ENCODE measurements at regions of chr5 and their contacts with region 1.

Region 1: DNA sequence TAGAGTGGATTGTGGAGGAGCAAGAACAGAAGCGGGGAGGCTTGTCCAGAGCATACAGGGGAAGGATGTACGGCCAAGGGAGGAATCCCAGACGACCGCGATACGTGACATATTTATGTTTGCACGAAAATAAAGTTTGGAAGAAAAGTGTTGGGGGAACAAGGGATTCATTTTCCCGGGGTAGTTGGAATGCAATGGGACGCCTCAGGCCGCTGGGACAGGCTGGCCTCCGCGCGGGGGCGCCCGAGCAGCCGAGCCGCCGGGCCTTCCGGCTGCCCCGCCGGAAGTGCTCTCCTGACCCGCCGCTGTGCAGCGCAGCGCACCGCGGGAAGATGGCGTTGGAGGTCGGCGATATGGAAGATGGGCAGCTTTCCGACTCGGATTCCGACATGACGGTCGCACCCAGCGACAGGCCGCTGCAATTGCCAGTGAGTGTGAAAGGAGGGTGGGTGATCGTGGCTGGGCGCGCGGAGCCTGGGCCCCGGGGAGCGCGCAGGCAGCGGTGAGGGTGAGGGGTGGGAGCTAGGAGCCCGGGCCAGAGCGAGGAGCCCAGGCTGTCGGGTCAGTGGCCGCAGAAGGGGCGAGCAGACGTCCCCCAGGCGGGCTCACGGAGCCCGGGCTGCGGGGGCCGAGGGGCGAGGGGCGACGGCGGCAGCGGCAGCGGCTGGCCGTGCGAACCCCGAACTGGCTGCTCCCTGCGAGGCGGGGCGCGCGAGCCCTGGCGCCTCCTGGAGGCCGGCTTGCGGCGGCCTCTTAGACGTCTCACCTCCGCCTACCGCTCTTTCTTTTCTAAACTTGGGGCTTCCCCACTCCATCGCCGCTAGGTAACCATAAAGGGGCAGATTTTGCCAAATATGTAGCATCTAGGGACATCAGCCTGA is at the start of gene PHAX:
- DNase-seq: peak; percentile 21
- H3K4me3 ChIP-seq: peak within 1 kb of the TSS; percentile 87
- H3K27me3 ChIP-seq: no peaks in the 10 kb centered on the region
- CTCF ChIP-seq: peak; percentile 71
- polyA plus RNA-seq, gene PHAX: 40.7 and 41.6 TPM in 2 replicates

Region 2: DNA sequence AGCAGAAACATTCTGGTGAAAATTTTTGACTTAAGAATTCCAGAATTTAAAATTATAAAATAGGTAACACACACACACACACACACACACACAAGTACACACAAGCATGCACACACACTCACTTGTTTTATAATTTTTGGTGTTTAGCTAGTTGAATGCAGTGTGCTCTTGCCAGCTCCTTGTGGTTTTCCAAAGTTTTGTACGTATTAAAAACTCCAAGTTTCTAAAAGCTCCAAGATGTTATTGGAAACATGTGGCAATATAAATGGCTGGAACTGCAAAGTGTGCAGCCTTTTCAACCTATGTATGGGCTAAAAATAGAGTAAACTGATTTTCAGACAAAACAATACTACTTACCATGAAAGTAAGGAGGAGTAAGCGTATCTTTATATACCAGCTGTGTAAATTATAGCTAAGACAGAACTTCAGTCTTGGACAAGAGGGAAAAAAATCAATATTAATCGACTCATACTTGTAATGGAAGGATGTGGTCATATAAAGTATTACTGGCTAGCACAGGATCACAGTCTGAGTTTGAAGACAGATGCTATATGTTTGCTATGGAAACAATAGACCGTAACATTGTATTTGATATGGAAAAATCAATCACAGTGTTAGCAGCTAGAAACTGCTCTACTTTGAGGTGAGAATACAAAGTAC is 904.7 kb before region 1 on chr5:
- CTCF ChIA-PET with region 1: no interaction called
- POLR2A ChIA-PET with region 1: no interaction called
- DNase-seq: no peak
- H3K4me3 ChIP-seq: no peak overlapping the region
- H3K27me3 ChIP-seq: no peaks in the 10 kb centered on the region
- CTCF ChIP-seq: no peak

Region 3: GRCh38 chr5:126354012-126354857 is 246.6 kb before region 1 on chr5:
- CTCF ChIA-PET with region 1: interaction called, 11 read pairs
- POLR2A ChIA-PET with region 1: no interaction called
- DNase-seq: peak; percentile 96
- H3K4me3 ChIP-seq: peak overlapping the region; percentile 17; the same call in 1 of the 2 replicates
- H3K27me3 ChIP-seq: no peaks in the 10 kb centered on the region
- CTCF ChIP-seq: peak; percentile 40

Region 4: GRCh38 chr5:126414874-126415502 is 185.9 kb before region 1 on chr5:
- CTCF ChIA-PET with region 1: no interaction called
- POLR2A ChIA-PET with region 1: no interaction called
- DNase-seq: peak; percentile 44
- H3K4me3 ChIP-seq: no peak overlapping the region
- H3K27me3 ChIP-seq: no peaks in the 10 kb centered on the region
- CTCF ChIP-seq: no peak

Region 5: GRCh38 chr5:126624534-126624933 is 23.7 kb after region 1 on chr5:
- CTCF ChIA-PET with region 1: interaction called, 10 read pairs
- POLR2A ChIA-PET with region 1: no interaction called
- DNase-seq: peak; percentile 82
- H3K4me3 ChIP-seq: no peak overlapping the region
- H3K27me3 ChIP-seq: no peaks in the 10 kb centered on the region
- CTCF ChIP-seq: no peak

Region 6: GRCh38 chr5:126837906-126838539 is 237.2 kb after region 1 on chr5:
- CTCF ChIA-PET with region 1: no interaction called
- POLR2A ChIA-PET with region 1: no interaction called
- DNase-seq: no peak
- H3K4me3 ChIP-seq: no peak overlapping the region
- H3K27me3 ChIP-seq: no peaks in the 10 kb centered on the region
- CTCF ChIP-seq: peak; percentile 44

Region 7: DNA sequence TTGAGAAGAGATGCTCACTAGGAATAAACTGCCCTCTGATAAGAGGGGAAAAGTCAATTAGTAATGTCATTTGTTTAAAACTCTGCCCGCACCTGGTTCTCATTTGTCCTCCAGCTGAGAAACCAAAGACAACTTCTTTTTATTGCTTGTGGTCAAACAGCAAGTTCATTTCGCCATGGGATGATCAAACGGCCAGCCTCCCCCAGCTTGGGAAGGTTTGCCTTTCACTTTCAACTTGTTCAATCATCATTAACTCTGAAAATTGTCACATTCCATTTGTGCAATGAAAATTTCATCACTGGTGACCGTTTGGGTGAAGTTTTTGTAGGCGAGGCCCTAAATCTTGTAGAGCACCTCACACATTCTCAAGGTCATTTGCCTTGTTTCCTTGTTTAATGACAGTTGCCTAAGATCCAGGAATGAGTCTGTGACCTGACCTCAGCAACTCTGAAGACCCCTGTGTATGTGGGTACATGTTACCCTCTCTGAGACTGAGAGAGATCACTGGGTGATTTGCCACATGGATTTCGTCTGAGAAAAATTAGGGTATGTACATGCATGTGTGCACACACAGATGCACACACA is 311.8 kb after region 1 on chr5:
- CTCF ChIA-PET with region 1: no interaction called
- POLR2A ChIA-PET with region 1: no interaction called
- DNase-seq: peak; percentile 38
- H3K4me3 ChIP-seq: no peak overlapping the region
- H3K27me3 ChIP-seq: no peaks in the 10 kb centered on the region
- CTCF ChIP-seq: no peak

Measured in BJ (cell line).